ENCODE measurements at regions of chr4 and their contacts with region 1.

Region 1: DNA sequence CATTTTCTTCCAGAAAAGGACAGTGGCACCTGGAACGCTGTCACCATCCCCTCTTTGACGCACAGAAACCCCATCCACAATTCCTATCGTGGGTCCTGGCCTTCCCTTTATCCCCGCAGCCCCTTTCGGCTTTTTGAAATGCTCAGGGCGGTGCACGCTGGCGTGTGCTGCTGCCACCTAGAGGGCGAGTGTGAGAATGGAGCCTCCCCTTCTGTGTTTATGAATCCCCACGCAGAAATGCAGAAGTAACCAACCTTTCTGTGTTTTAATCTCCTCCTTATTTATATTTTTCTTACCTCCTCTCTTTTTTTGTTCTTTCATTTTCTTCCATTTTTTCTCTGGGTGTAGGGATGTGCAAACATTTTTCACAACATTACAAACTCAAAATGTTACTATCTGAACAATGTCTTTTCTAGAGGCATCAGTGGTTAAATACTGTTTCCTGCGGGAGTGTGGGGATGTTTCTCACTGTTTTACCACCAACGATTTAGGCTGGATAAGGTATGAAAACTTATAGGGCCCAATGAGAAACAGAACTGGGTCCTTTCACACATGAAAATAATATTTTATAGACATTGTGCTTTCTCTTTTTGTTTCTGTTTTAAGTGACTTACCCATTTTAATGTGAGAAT is 50.0 kb downstream of the TMA16 start:
- DNase-seq: peak; percentile 41 to 49 (median 45)
- H3K4me3 ChIP-seq: peak overlapping the region in 1 of 2 donors; percentile 43
- H3K4me3 Mint-ChIP-seq: no peak overlapping the region
- H3K27ac ChIP-seq: no peak overlapping the region
- H3K27ac Mint-ChIP-seq: no peak overlapping the region
- H3K4me1 ChIP-seq: no peaks in the 10 kb centered on the region
- H3K4me1 Mint-ChIP-seq: peaks cover 1 to 13% (median 7%) of the 10 kb centered on the region in 4 donors
- H3K27me3 ChIP-seq: no peaks in the 10 kb centered on the region
- H3K27me3 Mint-ChIP-seq: no peaks in the 10 kb centered on the region

Region 2: GRCh38 chr4:163166041-163166579 is 378.4 kb before region 1 on chr4:
- CTCF ChIA-PET with region 1: no interaction called
- POLR2A ChIA-PET with region 1: no interaction called
- intact Hi-C with region 1: loop called (anchors 1 kb)
- DNase-seq: peak; percentile 66 to 76 (median 68)
- H3K4me3 ChIP-seq: peak overlapping the region; percentile 66 to 80
- H3K4me3 Mint-ChIP-seq: peak overlapping the region; percentile 83 to 97 (median 95)
- H3K27ac ChIP-seq: peak overlapping the region; percentile 90
- H3K27ac Mint-ChIP-seq: peak overlapping the region; percentile 83 to 99 (median 99)
- H3K4me1 ChIP-seq: peaks cover 37% of the 10 kb centered on the region
- H3K4me1 Mint-ChIP-seq: peaks cover 34 to 50% (median 41%) of the 10 kb centered on the region in 4 donors
- H3K27me3 ChIP-seq: no peaks in the 10 kb centered on the region
- H3K27me3 Mint-ChIP-seq: no peaks in the 10 kb centered on the region

Region 3: GRCh38 chr4:163332500-163333406 is 211.8 kb before region 1 on chr4 and contains the start of gene NPY1R:
- CTCF ChIA-PET with region 1: no interaction called
- POLR2A ChIA-PET with region 1: no interaction called
- intact Hi-C with region 1: no loop called
- DNase-seq: peak in 1 of 5 donors; percentile 6
- H3K4me3 ChIP-seq: no peak within 1 kb of the TSS
- H3K4me3 Mint-ChIP-seq: peak within 1 kb of the TSS; percentile 23 to 76 (median 62)
- H3K27ac ChIP-seq: no peak within 1 kb of the TSS
- H3K27ac Mint-ChIP-seq: no peak within 1 kb of the TSS
- H3K4me1 ChIP-seq: peaks cover 7% of the 10 kb centered on the region
- H3K4me1 Mint-ChIP-seq: peaks cover 5 to 19% (median 15%) of the 10 kb centered on the region in 4 donors
- H3K27me3 ChIP-seq: peaks cover 4% of the 10 kb centered on the region
- H3K27me3 Mint-ChIP-seq: peaks cover 31% of the 10 kb centered on the region in 2 donors
- total RNA-seq, gene NPY1R: not detected

Region 4: GRCh38 chr4:163367651-163368050 is 176.9 kb before region 1 on chr4:
- CTCF ChIA-PET with region 1: no interaction called
- POLR2A ChIA-PET with region 1: no interaction called
- intact Hi-C with region 1: no loop called
- DNase-seq: no peak
- H3K4me3 ChIP-seq: no peak overlapping the region
- H3K4me3 Mint-ChIP-seq: no peak overlapping the region
- H3K27ac ChIP-seq: no peak overlapping the region
- H3K27ac Mint-ChIP-seq: no peak overlapping the region
- H3K4me1 ChIP-seq: no peaks in the 10 kb centered on the region
- H3K4me1 Mint-ChIP-seq: no peaks in the 10 kb centered on the region
- H3K27me3 ChIP-seq: no peaks in the 10 kb centered on the region
- H3K27me3 Mint-ChIP-seq: peaks cover 5 to 9% of the 10 kb centered on the region in 2 donors

Region 5: DNA sequence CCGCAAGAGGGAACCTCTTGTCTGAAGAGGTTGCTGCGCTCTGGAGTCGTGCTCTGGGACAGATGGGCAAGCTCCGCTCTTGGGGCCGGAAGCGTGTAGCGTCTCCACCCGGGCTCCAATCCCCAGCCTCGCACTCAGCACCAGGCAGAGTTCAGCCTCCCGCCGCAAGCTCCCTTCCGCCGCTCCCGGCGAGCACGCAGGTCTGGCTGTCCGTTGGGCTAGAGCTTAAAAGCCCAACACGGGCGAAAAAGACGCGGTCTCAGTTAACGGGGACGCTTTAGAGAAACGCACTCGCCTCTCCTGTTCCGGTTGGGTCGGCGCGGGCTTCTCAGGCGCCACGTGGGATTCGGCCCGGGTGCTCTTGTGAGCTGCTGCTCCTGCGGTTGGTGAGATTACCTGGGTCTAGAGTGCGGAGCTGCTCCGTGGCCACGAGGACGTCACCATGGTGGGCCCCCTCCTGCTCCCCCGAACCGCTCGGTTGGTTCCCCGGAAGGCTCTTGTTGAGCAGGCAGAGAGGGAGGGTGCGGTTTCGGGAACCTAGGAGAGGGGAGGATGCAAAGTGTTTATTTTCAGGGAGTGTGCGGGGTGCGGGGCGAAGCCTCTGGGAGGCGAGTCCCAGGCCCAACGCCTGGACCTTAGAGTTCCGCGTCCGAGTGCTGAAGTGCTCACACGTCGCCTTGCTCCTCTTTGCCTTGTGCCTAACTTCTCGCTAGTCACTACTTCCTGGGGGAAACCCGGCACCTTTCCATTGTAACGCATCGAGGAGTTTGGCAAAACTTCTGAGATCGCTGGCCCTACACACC is 50.0 kb before region 1 on chr4 and contains the start of gene TMA16:
- CTCF ChIA-PET with region 1: interaction called, 40 read pairs
- POLR2A ChIA-PET with region 1: interaction called, 13 read pairs
- intact Hi-C with region 1: loop called (anchors 2 kb)
- DNase-seq: peak; percentile 79 to 85 (median 83)
- H3K4me3 ChIP-seq: peak within 1 kb of the TSS; percentile 77 to 98
- H3K4me3 Mint-ChIP-seq: peak within 1 kb of the TSS; percentile 91 to 98 (median 96)
- H3K27ac ChIP-seq: peak within 1 kb of the TSS; percentile 75
- H3K27ac Mint-ChIP-seq: peak within 1 kb of the TSS; percentile 90 to 99 (median 96)
- H3K4me1 ChIP-seq: peaks cover 33% of the 10 kb centered on the region
- H3K4me1 Mint-ChIP-seq: peaks cover 20 to 40% (median 33%) of the 10 kb centered on the region in 4 donors
- H3K27me3 ChIP-seq: no peaks in the 10 kb centered on the region
- H3K27me3 Mint-ChIP-seq: peaks cover 1 to 4% of the 10 kb centered on the region in 2 donors
- total RNA-seq, gene TMA16: 24.6 to 25.0 TPM

Region 6: DNA sequence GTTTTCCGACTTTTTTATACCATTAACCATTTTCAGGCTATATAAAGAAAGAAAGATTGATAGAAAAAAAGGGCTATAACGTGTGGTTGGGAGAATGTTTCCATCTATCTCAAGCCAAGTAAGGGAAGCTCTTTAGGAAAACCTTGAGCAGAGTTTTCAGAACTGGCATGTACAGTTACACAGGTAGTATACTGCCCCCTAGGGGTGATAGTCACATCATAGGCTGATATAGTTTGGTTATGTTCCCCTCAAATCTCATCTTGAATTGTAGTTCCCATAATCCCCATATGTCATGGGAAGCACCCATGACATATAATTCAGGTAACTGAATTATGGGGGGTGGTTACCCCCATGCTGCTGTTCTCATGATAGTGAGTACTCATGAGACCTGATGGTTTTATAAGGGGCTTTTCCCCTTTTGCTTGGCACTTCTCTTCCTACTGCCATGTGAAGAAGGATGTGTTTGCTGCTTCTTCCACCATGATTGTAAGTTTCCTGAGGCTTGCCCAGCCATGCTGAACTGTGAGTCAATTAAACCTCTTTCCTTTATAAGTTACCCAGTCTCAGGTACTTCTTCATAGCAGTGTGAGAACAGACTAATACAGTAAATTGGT is 136.8 kb after region 1 on chr4:
- CTCF ChIA-PET with region 1: interaction called, 633 read pairs
- POLR2A ChIA-PET with region 1: no interaction called
- intact Hi-C with region 1: no loop called
- DNase-seq: peak; percentile 28 to 66 (median 65)
- H3K4me3 ChIP-seq: no peak overlapping the region
- H3K4me3 Mint-ChIP-seq: no peak overlapping the region
- H3K27ac ChIP-seq: no peak overlapping the region
- H3K27ac Mint-ChIP-seq: no peak overlapping the region
- H3K4me1 ChIP-seq: no peaks in the 10 kb centered on the region
- H3K4me1 Mint-ChIP-seq: peaks cover 1 to 9% (median 4%) of the 10 kb centered on the region in 4 donors
- H3K27me3 ChIP-seq: no peaks in the 10 kb centered on the region
- H3K27me3 Mint-ChIP-seq: peaks cover 2 to 7% of the 10 kb centered on the region in 2 donors

Region 7: DNA sequence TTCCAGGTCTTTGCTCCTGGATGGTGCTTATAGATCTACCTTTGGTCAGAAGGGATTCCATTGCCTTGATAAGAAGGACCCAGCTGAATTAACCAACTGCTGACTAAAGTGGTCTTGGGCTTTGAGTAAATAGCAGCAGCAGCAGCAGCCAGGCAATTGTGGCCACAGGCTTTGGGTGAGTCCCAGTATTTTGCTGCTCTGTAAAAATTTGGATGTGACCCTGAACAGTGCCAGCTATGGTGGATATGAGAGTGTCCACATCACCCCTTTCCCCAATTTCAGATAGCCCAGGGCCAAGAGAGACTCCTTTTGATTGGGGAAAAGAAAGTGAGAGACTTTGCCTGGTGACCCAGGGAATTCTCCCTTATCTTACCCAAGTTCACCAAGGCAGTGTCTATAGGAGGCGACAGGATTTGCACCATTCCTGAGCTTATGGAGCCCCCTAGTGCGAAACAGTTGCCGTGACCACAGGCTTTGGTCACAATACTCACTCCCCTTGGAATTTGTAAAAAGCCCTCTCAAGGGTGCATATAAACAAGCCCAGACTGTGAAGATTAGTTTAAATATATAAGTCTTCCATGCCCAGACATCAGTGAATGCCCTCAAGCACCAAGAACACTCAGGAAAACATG is 468.0 kb after region 1 on chr4:
- CTCF ChIA-PET with region 1: interaction called, 21 read pairs
- POLR2A ChIA-PET with region 1: no interaction called
- intact Hi-C with region 1: no loop called
- DNase-seq: peak in 3 of 5 donors; percentile 9 to 24 (median 19)
- H3K4me3 ChIP-seq: no peak overlapping the region
- H3K4me3 Mint-ChIP-seq: no peak overlapping the region
- H3K27ac ChIP-seq: no peak overlapping the region
- H3K27ac Mint-ChIP-seq: no peak overlapping the region
- H3K4me1 ChIP-seq: peaks cover 13% of the 10 kb centered on the region
- H3K4me1 Mint-ChIP-seq: peaks cover 3 to 34% (median 19%) of the 10 kb centered on the region in 4 donors
- H3K27me3 ChIP-seq: no peaks in the 10 kb centered on the region
- H3K27me3 Mint-ChIP-seq: peaks cover 0 to 3% of the 10 kb centered on the region in 2 donors